ENCODE measurements at regions of chr2 and their contacts with region 1.

Region 1: GRCh38 chr2:111897924-111898702 is at the start of gene MERTK:
- DNase-seq: peak; percentile 43
- H3K4me3 ChIP-seq: peak within 1 kb of the TSS; percentile 36 to 53 (median 44)
- H3K27ac ChIP-seq: no peak within 1 kb of the TSS
- H3K4me1 ChIP-seq: peaks cover 20% of the 10 kb centered on the region
- H3K27me3 ChIP-seq: peaks cover 17% of the 10 kb centered on the region
- CTCF ChIP-seq: peak in 1 of 2 donors; percentile 78
- total RNA-seq, gene MERTK: under 0.01 to 0.19 TPM

Region 2: GRCh38 chr2:111975053-111975552 is 77.0 kb after region 1 on chr2:
- CTCF ChIA-PET with region 1: interaction called, 15 read pairs
- dilution Hi-C with region 1: no loop called
- in situ Hi-C with region 1: no loop called
- intact Hi-C with region 1: no loop called
- DNase-seq: peak; percentile 98
- H3K4me3 ChIP-seq: no peak overlapping the region
- H3K27ac ChIP-seq: no peak overlapping the region
- H3K4me1 ChIP-seq: peaks cover 15% of the 10 kb centered on the region
- H3K27me3 ChIP-seq: peaks cover 11% of the 10 kb centered on the region
- CTCF ChIP-seq: no peak

Region 3: GRCh38 chr2:112001136-112001715 is 103.1 kb after region 1 on chr2:
- CTCF ChIA-PET with region 1: no interaction called
- dilution Hi-C with region 1: no loop called
- in situ Hi-C with region 1: no loop called
- intact Hi-C with region 1: no loop called
- DNase-seq: no peak
- H3K4me3 ChIP-seq: no peak overlapping the region
- H3K27ac ChIP-seq: no peak overlapping the region
- H3K4me1 ChIP-seq: peaks cover 5% of the 10 kb centered on the region
- H3K27me3 ChIP-seq: peaks cover 10% of the 10 kb centered on the region
- CTCF ChIP-seq: no peak

Region 4: DNA sequence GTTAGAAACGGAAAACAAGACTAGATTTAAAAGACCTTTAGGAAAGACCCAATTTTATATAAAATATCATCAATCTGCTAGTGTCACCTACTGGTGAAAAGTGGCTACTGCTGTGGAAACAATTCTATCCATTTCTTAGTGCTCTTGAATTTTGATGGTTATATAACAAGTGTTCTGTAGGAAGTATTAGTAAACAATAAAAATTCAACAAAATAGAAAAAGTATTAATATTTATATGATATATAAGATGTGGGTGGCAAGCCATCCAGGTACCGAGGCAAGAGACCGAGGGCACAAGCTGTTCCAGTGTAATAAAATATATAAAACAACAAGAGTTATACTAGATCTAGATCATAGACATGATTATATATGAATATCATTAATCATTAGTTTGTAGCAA is 150.8 kb after region 1 on chr2:
- CTCF ChIA-PET with region 1: no interaction called
- dilution Hi-C with region 1: no loop called
- in situ Hi-C with region 1: loop called (anchors 5 to 10 kb)
- intact Hi-C with region 1: loop called (anchors 1 kb)
- DNase-seq: peak; percentile 38
- H3K4me3 ChIP-seq: no peak overlapping the region
- H3K27ac ChIP-seq: no peak overlapping the region
- H3K4me1 ChIP-seq: peaks cover 7% of the 10 kb centered on the region
- H3K27me3 ChIP-seq: no peaks in the 10 kb centered on the region
- CTCF ChIP-seq: peak; percentile 79 to 92

Region 5: DNA sequence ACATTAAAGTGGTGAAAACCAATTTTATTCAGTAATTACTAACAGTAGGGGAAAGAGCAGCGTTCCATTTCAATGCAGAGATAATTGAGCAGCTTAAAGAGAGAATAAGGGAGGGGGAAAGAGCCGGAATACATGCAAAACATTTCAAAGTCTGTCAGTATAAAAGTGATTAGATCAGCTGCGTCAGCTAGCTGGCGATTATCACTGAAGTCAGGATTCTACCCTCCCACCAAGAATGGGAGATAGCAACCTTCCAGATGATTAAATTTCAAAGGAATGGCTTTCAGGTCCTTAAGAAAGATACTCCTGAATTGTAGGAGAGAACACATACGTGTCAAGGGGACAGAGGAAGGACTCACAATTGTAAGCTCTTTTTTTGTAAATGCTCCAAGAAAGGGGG is 374.6 kb after region 1 on chr2:
- CTCF ChIA-PET with region 1: no interaction called
- dilution Hi-C with region 1: no loop called
- in situ Hi-C with region 1: no loop called
- intact Hi-C with region 1: no loop called
- DNase-seq: no peak
- H3K4me3 ChIP-seq: no peak overlapping the region
- H3K27ac ChIP-seq: no peak overlapping the region
- H3K4me1 ChIP-seq: no peaks in the 10 kb centered on the region
- H3K27me3 ChIP-seq: no peaks in the 10 kb centered on the region
- CTCF ChIP-seq: no peak

Measured in mammary epithelial cell (primary cell).